ENCODE measurements at regions of chr14 and their contacts with region 1.

Region 1: GRCh38 chr14:23186913-23187654 is 3.6 kb upstream of the SLC7A8 start:
- DNase-seq: peak; percentile 81
- H3K4me3 ChIP-seq: no peak overlapping the region
- H3K27ac ChIP-seq: no peak overlapping the region
- H3K4me1 ChIP-seq: peaks cover 22% of the 10 kb centered on the region
- H3K27me3 ChIP-seq: peaks cover under 1 to 5% of the 10 kb centered on the region in 2 experiments
- CTCF ChIP-seq: peak; percentile 61 to 73
- POLR2A ChIP-seq: no peak

Region 2: DNA sequence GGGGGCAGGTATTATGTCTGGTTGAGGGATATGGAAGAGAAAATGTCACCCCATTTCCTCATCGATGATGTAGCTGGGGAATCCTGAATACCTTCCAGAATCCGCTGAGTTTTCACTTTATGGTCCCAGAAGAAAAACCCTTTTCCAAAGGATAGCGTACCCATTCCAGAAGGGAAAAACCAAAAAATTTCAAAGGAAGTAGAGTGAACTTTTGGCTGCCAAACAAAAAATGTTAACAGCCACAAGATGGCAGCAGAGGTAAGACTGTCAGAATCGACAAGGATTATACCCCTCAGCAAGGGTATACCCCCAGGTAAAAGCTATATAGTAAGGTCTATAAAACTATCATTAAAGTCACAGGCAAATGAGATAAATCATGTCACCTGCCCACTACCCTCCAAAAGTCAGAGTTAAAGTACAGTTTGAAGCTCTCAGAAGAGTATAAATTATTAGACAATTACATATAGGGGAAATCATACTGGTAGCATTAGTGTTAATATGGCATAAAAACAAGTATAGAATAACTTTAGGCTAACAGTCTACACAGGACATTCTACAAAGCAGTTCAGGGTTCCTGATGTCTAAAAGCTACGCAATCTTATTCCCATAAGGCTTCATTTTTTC is 110.2 kb before region 1 on chr14:
- CTCF ChIA-PET with region 1: interaction called, 6 read pairs
- POLR2A ChIA-PET with region 1: no interaction called
- dilution Hi-C with region 1: no loop called
- intact Hi-C with region 1: loop called (anchors 1 kb)
- DNase-seq: peak; percentile 49
- H3K4me3 ChIP-seq: no peak overlapping the region
- H3K27ac ChIP-seq: no peak overlapping the region
- H3K4me1 ChIP-seq: peaks cover 27% of the 10 kb centered on the region
- H3K27me3 ChIP-seq: no peaks in the 10 kb centered on the region
- CTCF ChIP-seq: peak; percentile 46 to 53
- POLR2A ChIP-seq: no peak

Region 3: DNA sequence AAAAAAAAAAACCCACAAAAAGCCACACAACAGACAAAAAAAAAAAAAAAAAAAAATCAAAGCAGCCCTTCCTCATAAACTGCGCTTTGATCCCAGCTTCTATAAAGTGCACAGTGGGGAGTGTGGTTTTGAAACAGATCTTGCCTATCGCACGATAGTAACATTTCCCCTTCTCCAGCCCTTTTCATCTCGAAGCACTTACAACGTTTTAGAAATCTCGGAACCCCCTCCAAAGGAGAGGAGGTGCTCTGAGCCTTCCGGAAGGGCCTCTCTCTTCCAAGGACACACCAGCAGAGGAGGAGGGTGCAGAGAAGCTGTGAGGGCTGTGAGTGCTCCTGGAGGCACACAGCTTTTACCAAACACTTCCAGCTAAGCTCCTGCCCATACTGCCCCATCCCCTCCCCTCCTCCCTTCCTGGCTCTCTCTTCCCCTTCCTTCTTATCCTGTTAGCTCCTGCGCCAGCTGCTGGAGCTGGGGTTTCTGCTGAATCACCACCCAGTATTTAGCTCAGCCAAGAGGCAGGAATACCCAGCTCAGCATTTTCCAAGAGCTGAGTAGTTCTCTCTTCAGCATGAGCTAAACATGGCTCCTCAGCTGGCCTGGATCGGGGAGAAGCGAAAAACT is 32.0 kb before region 1 on chr14:
- CTCF ChIA-PET with region 1: interaction called, 6 read pairs
- POLR2A ChIA-PET with region 1: no interaction called
- dilution Hi-C with region 1: no loop called
- intact Hi-C with region 1: loop called (anchors 2 kb)
- DNase-seq: peak; percentile 85
- H3K4me3 ChIP-seq: no peak overlapping the region
- H3K27ac ChIP-seq: no peak overlapping the region
- H3K4me1 ChIP-seq: peaks cover 17% of the 10 kb centered on the region
- H3K27me3 ChIP-seq: no peaks in the 10 kb centered on the region
- CTCF ChIP-seq: no peak
- POLR2A ChIP-seq: no peak

Region 4: DNA sequence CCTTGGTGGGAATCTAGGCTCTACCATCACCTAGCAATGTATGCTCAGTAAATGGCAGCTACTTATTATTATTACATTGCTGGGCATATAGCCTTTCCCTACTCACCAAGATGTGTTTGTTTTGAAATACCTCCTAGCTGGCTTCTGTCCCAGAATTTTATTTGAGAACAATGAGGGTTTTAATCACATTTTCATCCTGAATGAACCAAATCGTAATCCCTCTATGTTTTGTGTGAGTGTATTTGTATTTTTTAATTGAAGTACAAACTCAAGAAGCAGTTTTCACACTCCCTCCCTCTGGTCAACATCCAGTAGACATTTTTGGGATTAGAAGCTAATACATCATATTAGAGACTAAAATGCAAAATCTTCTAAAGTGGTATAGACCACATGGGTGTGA is 11.3 kb before region 1 on chr14:
- CTCF ChIA-PET with region 1: interaction called, 10 read pairs
- POLR2A ChIA-PET with region 1: no interaction called
- dilution Hi-C with region 1: no loop called
- intact Hi-C with region 1: no loop called
- DNase-seq: peak; percentile 86
- H3K4me3 ChIP-seq: no peak overlapping the region
- H3K27ac ChIP-seq: no peak overlapping the region
- H3K4me1 ChIP-seq: peaks cover 6% of the 10 kb centered on the region
- H3K27me3 ChIP-seq: peaks cover 6 to 20% of the 10 kb centered on the region in 2 experiments
- CTCF ChIP-seq: no peak
- POLR2A ChIP-seq: no peak

Region 5: DNA sequence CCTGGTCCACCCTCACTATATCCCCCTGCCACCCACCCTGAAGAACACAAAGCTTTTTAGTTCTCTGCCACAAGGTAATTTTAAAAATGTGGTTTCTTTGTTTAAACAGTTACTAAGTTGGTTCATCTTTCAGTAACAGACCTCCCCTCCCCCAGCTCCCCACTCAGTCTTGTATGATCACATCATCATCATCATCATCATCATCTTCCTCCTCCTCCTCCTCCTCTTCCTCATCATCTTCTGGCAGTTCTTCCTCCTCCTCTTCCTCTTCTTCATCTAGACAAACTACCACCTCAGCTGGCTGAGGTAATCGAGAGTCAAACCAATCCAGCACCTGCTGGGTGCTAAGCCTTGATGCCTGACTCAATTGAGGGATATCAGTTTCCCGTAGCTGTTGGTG is 88.3 kb after region 1 on chr14:
- CTCF ChIA-PET with region 1: no interaction called
- POLR2A ChIA-PET with region 1: no interaction called
- dilution Hi-C with region 1: no loop called
- intact Hi-C with region 1: no loop called
- DNase-seq: no peak
- H3K4me3 ChIP-seq: no peak overlapping the region
- H3K27ac ChIP-seq: no peak overlapping the region
- H3K4me1 ChIP-seq: no peaks in the 10 kb centered on the region
- H3K27me3 ChIP-seq: no peaks in the 10 kb centered on the region
- CTCF ChIP-seq: no peak
- POLR2A ChIP-seq: no peak

Region 6: GRCh38 chr14:23301288-23301968 is 114.3 kb after region 1 on chr14:
- CTCF ChIA-PET with region 1: interaction called, 4 read pairs
- POLR2A ChIA-PET with region 1: no interaction called
- dilution Hi-C with region 1: no loop called
- intact Hi-C with region 1: loop called (anchors 1 kb)
- DNase-seq: peak; percentile 99
- H3K4me3 ChIP-seq: peak overlapping the region; percentile 30 to 79 (median 76)
- H3K27ac ChIP-seq: peak overlapping the region; percentile 75
- H3K4me1 ChIP-seq: peaks cover 18% of the 10 kb centered on the region
- H3K27me3 ChIP-seq: no peaks in the 10 kb centered on the region
- CTCF ChIP-seq: peak; percentile 79 to 91
- POLR2A ChIP-seq: no peak

Region 7: GRCh38 chr14:24080888-24081738 is 894.0 kb after region 1 on chr14:
- CTCF ChIA-PET with region 1: no interaction called
- POLR2A ChIA-PET with region 1: interaction called, 10 read pairs
- dilution Hi-C with region 1: no loop called
- intact Hi-C with region 1: no loop called
- DNase-seq: peak; percentile 7
- H3K4me3 ChIP-seq: peak overlapping the region; percentile 1 to 31 (median 25)
- H3K27ac ChIP-seq: no peak overlapping the region
- H3K4me1 ChIP-seq: no peaks in the 10 kb centered on the region
- H3K27me3 ChIP-seq: peaks cover 28 to 35% of the 10 kb centered on the region in 2 experiments
- CTCF ChIP-seq: no peak
- POLR2A ChIP-seq: no peak

Measured in endothelial cell of umbilical vein (primary cell).